Gastrocnemius medialis (tissue), 4 donors: ENCODE measurements at regions of chr12 and their contacts with region 1.

Region 1: GRCh38 chr12:4293299-4293965 is 19.9 kb downstream of the CCND2 start:
- DNase-seq: no peak
- ATAC-seq: no peak
- H3K4me3 ChIP-seq: no peak overlapping the region
- H3K27ac ChIP-seq: no peak overlapping the region
- H3K4me1 ChIP-seq: no peaks in the 10 kb centered on the region
- H3K27me3 ChIP-seq: peaks cover 3 to 5% (median 4%) of the 10 kb centered on the region in 3 donors
- CTCF ChIP-seq: no peak
- POLR2A ChIP-seq: no peak

Region 2: GRCh38 chr12:4518106-4518728 is 224.8 kb after region 1 on chr12:
- in situ Hi-C with region 1: no loop called
- intact Hi-C with region 1: no loop called
- DNase-seq: no peak
- ATAC-seq: no peak
- H3K4me3 ChIP-seq: no peak overlapping the region
- H3K27ac ChIP-seq: no peak overlapping the region
- H3K4me1 ChIP-seq: no peaks in the 10 kb centered on the region
- H3K27me3 ChIP-seq: no peaks in the 10 kb centered on the region
- CTCF ChIP-seq: no peak
- POLR2A ChIP-seq: no peak

Region 3: GRCh38 chr12:4843907-4844306 is 550.5 kb after region 1 on chr12:
- in situ Hi-C with region 1: no loop called
- intact Hi-C with region 1: loop called (anchors 5 kb)
- DNase-seq: no peak
- ATAC-seq: no peak
- H3K4me3 ChIP-seq: no peak overlapping the region
- H3K27ac ChIP-seq: no peak overlapping the region
- H3K4me1 ChIP-seq: no peaks in the 10 kb centered on the region
- H3K27me3 ChIP-seq: no peaks in the 10 kb centered on the region
- CTCF ChIP-seq: no peak
- POLR2A ChIP-seq: no peak